HepG2 (cell line): ENCODE measurements at regions of chr4 and their contacts with region 1.

Region 1: DNA sequence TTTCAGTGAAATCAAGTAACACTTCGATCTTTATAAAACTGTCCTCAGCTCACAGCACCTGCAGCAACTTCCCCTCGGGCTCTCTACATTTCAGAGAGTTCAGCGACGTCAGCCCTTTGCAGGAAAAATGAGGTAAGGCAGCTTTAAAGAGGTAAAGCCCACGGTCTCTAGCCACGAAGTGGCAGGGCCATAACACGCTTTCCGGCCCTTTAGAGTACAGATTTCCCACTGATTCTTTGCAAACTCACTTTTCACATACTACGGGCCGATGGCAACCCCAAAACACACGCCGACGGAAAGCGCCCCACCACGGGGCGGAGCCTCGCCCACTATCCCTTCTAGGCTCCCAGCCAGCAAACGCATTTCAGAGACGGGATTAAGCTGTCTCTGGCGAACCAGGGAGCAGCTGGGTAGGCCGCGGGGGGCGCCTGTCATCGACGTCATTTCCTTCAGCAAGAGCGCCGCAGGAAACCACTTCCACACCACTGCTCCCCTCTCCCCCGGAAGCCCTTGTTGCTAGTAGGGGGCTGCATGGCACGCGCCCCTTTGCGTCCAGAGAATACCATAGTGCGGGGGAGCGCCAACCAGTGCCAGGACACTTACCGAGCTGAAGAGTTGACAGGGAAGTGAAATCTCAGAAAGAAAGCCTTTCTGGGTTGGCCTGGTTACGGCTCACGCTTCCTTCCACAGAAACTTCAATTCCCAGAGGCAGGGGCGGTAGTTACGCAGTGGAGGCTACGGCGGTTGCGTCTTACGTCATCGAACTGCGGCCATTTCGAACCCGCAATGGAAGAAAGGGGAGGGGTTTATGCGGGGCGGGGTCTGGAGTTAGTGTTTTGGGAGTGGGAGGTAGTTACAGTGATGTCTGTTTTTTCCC is at the start of gene TRMT10A:
- DNase-seq: peak; percentile 96
- ATAC-seq: peak; percentile 96
- H3K4me3 ChIP-seq: peak within 1 kb of the TSS; percentile 81 to 85 (median 84)
- H3K27ac ChIP-seq: peak within 1 kb of the TSS; percentile 92
- H3K4me1 ChIP-seq: peaks cover 7% of the 10 kb centered on the region; the same call in 1 of the 2 replicates
- H3K27me3 ChIP-seq: no peaks in the 10 kb centered on the region
- CTCF ChIP-seq: no peak
- EP300 ChIP-seq: no peak; a peak in 1 of 4 replicates
- POLR2A ChIP-seq: peak; percentile 77 to 87
- RAD21 ChIP-seq: no peak
- total RNA-seq, gene TRMT10A: 12.6 and 18.8 TPM in 2 replicates

Region 2: DNA sequence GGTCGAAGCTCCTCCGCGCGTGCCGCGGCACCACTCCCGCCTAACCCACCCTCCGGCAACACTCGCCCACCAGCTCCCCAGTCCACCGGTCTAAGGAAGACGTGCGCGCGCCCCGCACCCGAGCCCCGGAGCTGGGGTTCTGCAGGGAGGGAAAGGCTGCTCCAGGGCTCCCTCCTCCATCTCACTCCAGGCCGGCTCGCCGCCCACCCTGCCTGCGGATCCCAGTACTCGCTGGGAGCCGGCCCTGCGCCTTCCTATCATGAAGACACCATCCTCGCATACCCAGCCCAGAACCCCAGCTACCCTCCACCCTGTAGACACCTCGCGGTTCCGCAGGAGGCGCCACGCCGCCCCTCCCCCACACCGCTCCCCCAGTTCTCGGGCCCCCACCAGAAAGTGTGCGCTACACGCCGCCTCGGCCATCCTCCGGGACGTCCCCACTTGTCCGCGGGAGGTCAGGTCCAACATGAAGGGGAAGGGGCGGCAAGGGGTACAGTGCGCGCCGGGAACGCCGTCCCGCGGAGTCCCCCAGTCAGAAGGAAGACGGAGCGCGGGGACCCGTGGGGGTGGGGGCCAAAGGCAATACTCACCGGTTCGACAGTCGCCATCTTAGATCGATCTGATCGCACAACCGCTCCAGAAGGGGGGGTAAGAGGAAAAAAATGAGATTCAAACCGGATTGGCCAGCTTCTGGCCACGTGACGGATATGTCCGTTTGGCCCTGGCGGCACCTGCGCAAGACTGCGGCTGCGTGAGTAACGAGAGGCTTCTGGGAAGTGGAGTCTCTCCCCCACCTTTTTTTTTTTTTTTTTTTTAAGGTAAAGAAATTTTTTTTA is 634.8 kb before region 1 on chr4 and contains the start of gene EIF4E:
- CTCF ChIA-PET with region 1: no interaction called
- POLR2A ChIA-PET with region 1: no interaction called
- in situ Hi-C with region 1: no loop called
- intact Hi-C with region 1: loop called (anchors 2 kb)
- DNase-seq: peak; percentile 98
- ATAC-seq: peak; percentile 78
- H3K4me3 ChIP-seq: peak within 1 kb of the TSS; percentile 82 to 99 (median 93)
- H3K27ac ChIP-seq: peak within 1 kb of the TSS; percentile 95
- H3K4me1 ChIP-seq: peaks cover 30% of the 10 kb centered on the region
- H3K27me3 ChIP-seq: no peaks in the 10 kb centered on the region; a peak in 1 of 5 replicates
- CTCF ChIP-seq: peak; percentile 42
- EP300 ChIP-seq: 0 out of 4 replicates have a peak, but pooled peaks of 1 of the 2 experiments have one; percentile 39
- POLR2A ChIP-seq: peak; percentile 49 to 67; a peak in 3 of 4 replicates
- RAD21 ChIP-seq: no peak; the same call in 1 of the 2 replicates
- total RNA-seq, gene EIF4E: 194 and 288 TPM in 2 replicates

Region 3: DNA sequence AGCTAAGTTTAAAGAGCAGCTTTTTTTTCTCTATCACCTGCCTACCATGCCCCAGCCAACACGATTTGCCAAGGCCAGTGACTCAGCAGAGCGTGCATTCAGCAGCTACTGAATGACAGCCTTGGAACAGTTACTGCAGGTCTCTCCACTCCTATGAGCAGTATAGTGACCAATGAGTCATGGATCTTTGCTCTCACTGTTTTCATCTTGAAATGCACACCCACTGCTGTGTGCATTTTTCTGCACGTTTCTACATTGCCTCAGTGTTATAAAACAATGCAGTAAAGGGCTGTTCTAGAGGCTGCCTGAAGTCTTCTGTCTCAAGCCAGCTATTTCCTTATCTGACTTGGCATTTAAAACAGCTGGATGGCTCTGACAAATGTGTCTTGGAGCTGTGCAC is 160.1 kb after region 1 on chr4:
- CTCF ChIA-PET with region 1: no interaction called
- POLR2A ChIA-PET with region 1: no interaction called
- in situ Hi-C with region 1: no loop called
- intact Hi-C with region 1: loop called (anchors 5 kb)
- DNase-seq: peak; percentile 58
- ATAC-seq: peak; percentile 98
- H3K4me3 ChIP-seq: no peak overlapping the region
- H3K27ac ChIP-seq: no peak overlapping the region
- H3K4me1 ChIP-seq: peaks cover 15% of the 10 kb centered on the region; the same call in 1 of the 2 replicates
- H3K27me3 ChIP-seq: no peaks in the 10 kb centered on the region
- CTCF ChIP-seq: no peak
- EP300 ChIP-seq: no peak
- POLR2A ChIP-seq: no peak
- RAD21 ChIP-seq: no peak

Region 4: DNA sequence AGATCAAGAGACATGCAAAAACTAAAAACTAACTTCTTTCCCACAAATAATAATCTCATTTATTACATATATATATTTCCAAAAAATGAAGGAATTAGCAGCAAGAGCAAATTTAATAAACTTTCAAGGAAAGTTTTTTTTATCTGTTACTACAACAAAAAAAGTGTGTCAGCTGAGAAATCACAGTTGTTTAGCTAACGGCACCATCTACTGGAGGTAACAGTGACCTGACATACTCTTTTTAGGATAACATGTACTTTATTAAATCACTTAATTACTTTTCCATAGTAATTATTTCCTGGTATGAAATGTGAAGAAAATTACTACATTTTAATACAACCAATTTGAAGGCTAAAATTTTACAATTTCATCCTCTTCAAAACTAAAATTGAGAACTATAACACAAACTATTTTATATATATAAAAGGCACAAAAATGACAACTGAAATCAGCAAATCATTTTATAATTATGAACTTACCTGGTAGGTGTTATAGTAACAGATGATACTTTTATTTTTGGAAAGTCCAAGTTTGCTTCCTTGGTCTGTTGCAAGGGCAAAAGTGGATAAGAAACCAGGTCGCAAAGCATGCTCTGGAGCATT is 321.6 kb after region 1 on chr4:
- CTCF ChIA-PET with region 1: interaction called, 6 read pairs
- POLR2A ChIA-PET with region 1: no interaction called
- in situ Hi-C with region 1: loop called (anchors 10 kb)
- intact Hi-C with region 1: loop called (anchors 1 kb)
- DNase-seq: peak; percentile 21
- ATAC-seq: no peak
- H3K4me3 ChIP-seq: no peak overlapping the region
- H3K27ac ChIP-seq: no peak overlapping the region
- H3K4me1 ChIP-seq: no peaks in the 10 kb centered on the region
- H3K27me3 ChIP-seq: no peaks in the 10 kb centered on the region
- CTCF ChIP-seq: peak; percentile 45
- EP300 ChIP-seq: no peak
- POLR2A ChIP-seq: no peak
- RAD21 ChIP-seq: no peak

Region 5: DNA sequence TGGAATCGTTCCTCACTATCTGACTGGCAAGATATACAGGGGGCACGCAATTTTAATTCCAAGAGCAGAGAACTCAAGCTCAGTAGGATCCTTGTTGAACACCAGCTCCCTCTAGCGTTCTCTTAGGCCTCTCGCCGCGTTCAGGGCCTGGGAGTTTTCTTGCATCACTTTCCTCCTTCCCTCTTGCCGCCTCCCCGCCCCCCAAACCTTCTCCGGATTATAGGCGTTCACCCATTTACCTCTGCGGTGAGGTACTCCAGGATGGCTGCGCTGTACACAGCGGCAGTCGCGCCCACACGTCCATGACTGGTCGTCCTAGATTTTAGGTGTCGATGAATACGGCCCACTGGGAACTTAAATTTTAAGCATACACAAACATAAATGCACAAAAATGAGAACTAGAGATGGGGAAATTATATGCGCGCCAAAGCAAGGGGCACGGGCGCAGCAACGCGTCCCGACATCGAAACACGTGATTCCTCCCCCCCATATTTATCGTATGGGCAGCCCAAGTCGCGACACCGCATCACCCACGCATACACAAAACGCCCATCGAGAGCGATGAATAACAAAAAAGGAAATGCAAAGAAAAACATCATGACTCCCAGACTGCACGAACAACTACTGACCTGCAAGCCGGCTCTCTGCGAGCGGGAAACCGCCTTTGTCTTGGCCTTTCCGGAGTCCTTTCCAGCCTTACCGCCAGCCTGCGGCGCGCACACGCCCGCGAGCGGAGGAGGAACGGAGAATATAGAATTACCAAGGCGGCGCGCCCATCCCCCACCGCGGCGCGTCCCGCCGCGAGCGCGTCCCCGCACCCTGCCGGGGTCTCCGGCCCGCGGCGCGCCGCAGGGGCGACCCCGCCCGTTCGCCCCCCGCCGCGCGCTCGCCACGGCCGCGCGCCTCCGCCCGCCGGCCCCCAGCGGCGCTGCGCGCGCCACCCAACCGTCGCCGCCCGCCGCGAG is 385.8 kb after region 1 on chr4:
- CTCF ChIA-PET with region 1: interaction called, 3 read pairs
- POLR2A ChIA-PET with region 1: interaction called, 10 read pairs
- in situ Hi-C with region 1: loop called (anchors 5 kb)
- intact Hi-C with region 1: loop called (anchors 1 kb)
- DNase-seq: peak; percentile 92
- ATAC-seq: peak; percentile 16
- H3K4me3 ChIP-seq: peak overlapping the region; percentile 88 to 96 (median 92)
- H3K27ac ChIP-seq: peak overlapping the region; percentile 98
- H3K4me1 ChIP-seq: peaks cover 33% of the 10 kb centered on the region
- H3K27me3 ChIP-seq: no peaks in the 10 kb centered on the region; a peak in 1 of 5 replicates
- CTCF ChIP-seq: peak; percentile 89
- EP300 ChIP-seq: 0 out of 4 replicates have a peak, but pooled peaks of 1 of the 2 experiments have one; percentile 20
- POLR2A ChIP-seq: peak; percentile 32 to 56; a peak in 2 of 4 replicates
- RAD21 ChIP-seq: peak; percentile 29; the same call in 1 of the 2 replicates